ENCODE measurements at regions of chr5 and their contacts with region 1.

Region 1: GRCh38 chr5:94968507-94969095 is 316.3 kb downstream of the MCTP1 start:
- H3K4me3 Mint-ChIP-seq: no peak overlapping the region
- H3K27ac Mint-ChIP-seq: no peak overlapping the region
- H3K4me1 Mint-ChIP-seq: peaks cover 5% of the 10 kb centered on the region
- H3K27me3 Mint-ChIP-seq: no peaks in the 10 kb centered on the region

Region 2: DNA sequence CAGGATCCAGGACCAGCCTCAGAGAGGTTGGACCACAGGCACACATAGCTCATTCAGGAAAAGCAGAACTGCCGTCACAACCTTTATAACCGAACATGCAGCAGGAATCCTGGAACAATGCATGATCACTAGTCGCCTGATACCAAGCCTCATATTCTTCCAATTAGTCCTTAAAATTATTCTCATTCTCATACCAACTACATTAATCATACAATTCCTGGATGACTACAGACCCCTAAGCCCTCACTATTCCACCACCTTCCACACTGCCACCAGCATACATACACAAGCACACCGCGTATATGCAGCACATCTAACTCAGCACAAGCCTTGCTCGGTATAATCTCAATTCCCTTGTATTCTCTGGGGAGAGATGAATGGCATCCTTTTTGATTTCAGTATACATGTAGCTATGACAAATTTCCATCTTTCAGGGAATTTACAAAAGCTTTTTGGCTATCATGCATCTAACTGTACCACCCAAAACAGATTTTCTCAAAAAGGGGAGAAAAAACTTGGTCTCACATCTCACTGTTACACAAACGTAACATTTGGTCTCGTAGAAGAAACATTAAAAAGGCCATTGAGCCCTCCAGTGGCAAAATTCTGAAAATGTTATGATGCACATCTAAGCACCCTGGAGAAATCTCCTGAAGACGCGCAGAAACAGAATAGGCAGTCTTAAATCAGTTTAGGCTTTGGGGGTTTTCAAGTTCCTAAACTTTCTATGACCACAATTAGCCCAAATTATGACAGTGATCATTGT is 270.1 kb after region 1 on chr5:
- intact Hi-C with region 1: loop called (anchors 1 kb)
- H3K4me3 Mint-ChIP-seq: no peak overlapping the region
- H3K27ac Mint-ChIP-seq: no peak overlapping the region
- H3K4me1 Mint-ChIP-seq: peaks cover 8% of the 10 kb centered on the region
- H3K27me3 Mint-ChIP-seq: peaks cover 11% of the 10 kb centered on the region

Region 3: GRCh38 chr5:95261437-95262175 is 293.0 kb after region 1 on chr5:
- intact Hi-C with region 1: loop called (anchors 1 kb)
- H3K4me3 Mint-ChIP-seq: no peak overlapping the region
- H3K27ac Mint-ChIP-seq: peak overlapping the region; percentile 84
- H3K4me1 Mint-ChIP-seq: peaks cover 16% of the 10 kb centered on the region
- H3K27me3 Mint-ChIP-seq: no peaks in the 10 kb centered on the region

Measured in dendritic cell treated with granulocyte-macrophage colony-stimulating factor and Interleukin-4, amounts not matched to agents 40 ng/mL and 50 ng/mL, for 4 days (primary cell).